H1 (cell line): ENCODE measurements at regions of chr6 and their contacts with region 1.

Region 1: DNA sequence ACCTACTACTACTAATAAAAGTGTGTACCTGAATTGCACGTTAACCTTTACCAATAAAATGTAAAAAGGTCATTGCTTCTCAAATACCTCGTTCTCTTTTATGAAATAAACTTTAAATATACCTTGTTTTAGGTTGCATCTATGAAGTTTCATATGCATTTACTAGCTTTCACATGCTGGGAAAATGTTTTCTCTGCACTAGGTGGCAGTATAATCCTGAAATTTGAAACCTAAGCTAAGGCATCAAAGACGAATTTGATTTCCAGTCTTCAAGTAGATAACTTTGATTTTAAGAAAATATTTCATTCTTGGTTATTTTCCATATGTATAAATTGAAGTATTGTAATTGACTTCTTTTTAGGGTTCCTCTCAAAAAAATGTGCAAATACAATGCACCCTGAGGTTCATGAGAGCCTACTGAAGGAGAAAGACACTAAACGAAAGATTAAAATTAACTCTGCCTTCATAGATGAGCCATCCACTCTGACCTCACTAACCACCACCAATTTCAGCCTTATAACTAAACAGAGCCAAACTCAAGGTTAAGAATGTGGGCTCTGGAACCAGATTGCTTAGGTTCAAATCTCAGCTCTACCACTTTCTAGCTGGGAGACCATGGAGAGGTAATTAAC is 7.3 kb upstream of the COL9A1 start:
- DNase-seq: no peak
- H3K4me3 ChIP-seq: no peak overlapping the region
- H3K27ac ChIP-seq: no peak overlapping the region
- H3K4me1 ChIP-seq: no peaks in the 10 kb centered on the region; a peak in 1 of 7 replicates
- H3K27me3 ChIP-seq: no peaks in the 10 kb centered on the region
- CTCF ChIP-seq: peak in 2 of 3 experiments; percentile 51 to 58; a peak in 2 of 4 replicates
- EP300 ChIP-seq: no peak
- POLR2A ChIP-seq: no peak
- RAD21 ChIP-seq: peak; percentile 66 to 72

Region 2: DNA sequence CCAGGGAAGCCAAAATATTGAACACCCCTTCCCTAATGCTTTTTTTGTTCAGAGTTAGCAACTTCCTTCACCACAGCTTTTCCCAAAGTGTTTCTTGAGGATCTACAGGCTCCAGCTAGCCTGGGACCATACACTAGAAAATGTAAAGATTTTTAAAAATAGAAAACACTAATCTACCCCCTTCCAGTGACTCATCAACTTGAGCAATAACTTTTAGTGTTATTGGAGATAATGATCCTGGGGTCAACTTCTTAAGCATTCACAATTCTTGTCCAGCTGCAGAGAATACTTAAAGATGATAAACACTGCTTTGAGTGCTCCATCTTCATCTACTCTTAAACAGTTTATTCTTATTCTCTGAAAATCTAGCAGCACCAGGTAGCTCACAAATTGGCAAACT is 138.9 kb before region 1 on chr6:
- CTCF ChIA-PET with region 1: no interaction called
- POLR2A ChIA-PET with region 1: no interaction called
- DNase-seq: no peak
- H3K4me3 ChIP-seq: no peak overlapping the region
- H3K27ac ChIP-seq: no peak overlapping the region
- H3K4me1 ChIP-seq: no peaks in the 10 kb centered on the region
- H3K27me3 ChIP-seq: no peaks in the 10 kb centered on the region
- CTCF ChIP-seq: no peak
- EP300 ChIP-seq: no peak
- POLR2A ChIP-seq: no peak
- RAD21 ChIP-seq: no peak

Region 3: DNA sequence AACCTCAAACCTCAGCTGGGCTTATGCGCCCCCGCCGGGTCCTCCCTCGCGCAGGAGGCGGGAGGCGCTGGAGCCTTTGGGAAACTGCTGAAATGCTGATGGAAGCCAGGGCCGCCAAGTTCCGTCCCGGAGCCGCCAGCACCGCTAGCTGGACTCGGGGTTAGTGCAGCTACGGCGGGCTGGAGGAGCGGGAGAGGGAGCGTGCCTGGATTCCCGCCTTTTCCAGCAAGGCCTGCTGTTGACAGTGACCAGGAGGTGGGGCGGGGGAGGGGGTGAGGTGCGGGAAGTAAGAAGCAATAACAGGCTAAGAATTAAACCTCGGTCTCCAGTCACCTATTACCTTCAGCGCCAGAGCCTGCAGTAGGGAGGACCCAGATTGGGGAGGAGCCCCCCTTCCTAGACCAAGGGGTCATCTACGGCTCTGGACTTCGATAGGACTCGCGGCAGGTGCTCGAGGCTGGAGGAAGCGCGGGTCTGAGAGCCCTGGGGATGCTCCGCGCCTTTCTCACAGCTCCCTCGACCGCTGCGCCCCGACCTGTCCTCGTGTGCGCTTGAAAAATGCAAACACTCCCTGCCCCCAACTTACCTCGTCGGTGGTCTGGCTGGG is 27.8 kb before region 1 on chr6:
- CTCF ChIA-PET with region 1: interaction called, 11 read pairs
- POLR2A ChIA-PET with region 1: no interaction called
- DNase-seq: peak; percentile 23 to 78
- H3K4me3 ChIP-seq: peak overlapping the region; percentile 28 to 68 (median 48)
- H3K27ac ChIP-seq: no peak overlapping the region
- H3K4me1 ChIP-seq: peaks cover 2 to 8% (median 5%) of the 10 kb centered on the region in 4 experiments; a peak in 5 of 7 replicates
- H3K27me3 ChIP-seq: peaks cover 13 to 38% (median 33%) of the 10 kb centered on the region in 4 experiments
- CTCF ChIP-seq: no peak
- EP300 ChIP-seq: no peak
- POLR2A ChIP-seq: peak in 1 of 2 experiments; percentile 31; a peak in 1 of 3 replicates
- RAD21 ChIP-seq: no peak

Region 4: DNA sequence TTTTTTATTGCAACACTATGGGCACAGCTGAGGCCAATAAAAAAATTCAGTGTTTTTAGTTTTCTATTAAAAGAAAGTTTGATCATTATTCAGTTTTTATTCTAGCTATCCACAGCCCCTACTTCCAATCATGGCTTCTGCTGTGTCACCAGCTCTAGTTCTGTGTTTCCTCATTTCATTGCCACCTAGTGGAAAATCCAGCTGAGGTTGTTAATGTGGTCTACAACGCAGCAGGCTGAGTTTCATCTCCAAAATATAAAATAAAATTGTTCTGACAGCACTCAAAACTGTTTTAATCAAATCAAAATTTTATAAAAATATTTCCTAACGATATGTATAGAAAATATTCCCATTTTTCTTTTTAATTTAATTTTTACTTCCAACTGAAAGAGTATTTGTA is 20.9 kb before region 1 on chr6:
- CTCF ChIA-PET with region 1: interaction called, 33 read pairs
- POLR2A ChIA-PET with region 1: no interaction called
- DNase-seq: no peak
- H3K4me3 ChIP-seq: no peak overlapping the region
- H3K27ac ChIP-seq: no peak overlapping the region
- H3K4me1 ChIP-seq: no peaks in the 10 kb centered on the region
- H3K27me3 ChIP-seq: no peaks in the 10 kb centered on the region; a peak in 1 of 7 replicates
- CTCF ChIP-seq: peak in 2 of 3 experiments; percentile 26 to 36; a peak in 2 of 4 replicates
- EP300 ChIP-seq: no peak
- POLR2A ChIP-seq: no peak
- RAD21 ChIP-seq: peak; percentile 27 to 38; a peak in 3 of 4 replicates

Region 5: GRCh38 chr6:70327036-70327435 is 16.9 kb after region 1 on chr6:
- CTCF ChIA-PET with region 1: interaction called, 20 read pairs
- POLR2A ChIA-PET with region 1: no interaction called
- DNase-seq: no peak
- H3K4me3 ChIP-seq: no peak overlapping the region
- H3K27ac ChIP-seq: no peak overlapping the region
- H3K4me1 ChIP-seq: no peaks in the 10 kb centered on the region
- H3K27me3 ChIP-seq: no peaks in the 10 kb centered on the region
- CTCF ChIP-seq: no peak
- EP300 ChIP-seq: no peak
- POLR2A ChIP-seq: no peak
- RAD21 ChIP-seq: no peak

Region 6: DNA sequence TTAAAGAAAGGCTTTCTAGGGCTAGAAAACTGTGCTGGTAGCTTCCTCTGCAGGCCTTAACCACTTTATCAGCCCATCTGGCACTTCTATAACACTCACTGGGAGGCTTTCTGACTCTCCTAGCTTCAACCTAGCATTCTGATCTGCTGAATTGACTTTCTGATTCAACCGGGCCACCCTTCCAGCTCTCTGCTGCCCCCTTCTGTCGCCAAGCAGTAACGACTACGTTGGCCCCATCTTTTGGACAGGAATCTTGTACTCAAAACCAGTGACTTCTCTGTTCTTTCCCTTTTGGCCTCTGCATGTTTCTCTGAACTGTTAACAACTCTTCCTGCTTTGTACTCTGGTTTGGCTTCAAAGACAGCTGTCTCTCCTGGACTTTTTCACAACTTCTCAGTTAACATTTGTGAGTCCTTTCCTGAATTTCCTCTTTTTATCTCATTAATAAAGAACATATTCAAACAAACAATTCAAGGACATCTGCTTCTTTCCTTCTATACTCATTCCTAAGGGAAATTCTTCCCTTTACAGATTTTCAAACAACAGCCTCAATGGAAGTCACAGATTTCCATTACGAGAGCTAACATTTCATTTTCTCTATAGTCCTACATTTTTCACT is 59.3 kb after region 1 on chr6:
- CTCF ChIA-PET with region 1: interaction called, 228 read pairs
- POLR2A ChIA-PET with region 1: no interaction called
- DNase-seq: peak; percentile 47 to 84
- H3K4me3 ChIP-seq: no peak overlapping the region
- H3K27ac ChIP-seq: no peak overlapping the region
- H3K4me1 ChIP-seq: no peaks in the 10 kb centered on the region
- H3K27me3 ChIP-seq: no peaks in the 10 kb centered on the region
- CTCF ChIP-seq: peak; percentile 77 to 96 (median 91)
- EP300 ChIP-seq: no peak
- POLR2A ChIP-seq: no peak
- RAD21 ChIP-seq: peak; percentile 88 to 89

Region 7: DNA sequence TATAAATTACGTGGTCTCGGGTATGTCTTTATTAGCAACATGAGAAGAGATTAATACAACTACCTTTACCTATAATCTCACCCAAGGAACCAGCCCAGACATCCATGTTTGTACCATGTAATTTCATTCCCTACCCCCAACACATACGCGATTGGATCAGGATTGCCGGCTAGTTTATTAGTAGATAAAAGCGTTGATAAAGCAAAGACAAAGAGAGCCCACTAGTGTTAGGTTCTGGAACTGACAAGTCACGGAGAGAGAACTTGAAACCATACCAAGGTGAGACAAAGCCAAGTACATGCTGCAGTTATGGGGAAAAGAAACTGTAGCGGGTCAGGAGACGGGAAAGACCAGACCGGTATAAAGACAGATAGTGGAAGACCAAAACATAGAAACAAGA is 65.7 kb after region 1 on chr6:
- CTCF ChIA-PET with region 1: interaction called, 228 read pairs
- POLR2A ChIA-PET with region 1: no interaction called
- DNase-seq: peak in 1 of 2 experiments; percentile 47
- H3K4me3 ChIP-seq: no peak overlapping the region
- H3K27ac ChIP-seq: no peak overlapping the region
- H3K4me1 ChIP-seq: no peaks in the 10 kb centered on the region; a peak in 1 of 7 replicates
- H3K27me3 ChIP-seq: no peaks in the 10 kb centered on the region
- CTCF ChIP-seq: peak in 2 of 3 experiments; percentile 40 to 67; a peak in 3 of 4 replicates
- EP300 ChIP-seq: no peak
- POLR2A ChIP-seq: no peak
- RAD21 ChIP-seq: peak; percentile 56 to 62

Region 8: GRCh38 chr6:70489393-70489792 is 179.2 kb after region 1 on chr6:
- CTCF ChIA-PET with region 1: no interaction called
- POLR2A ChIA-PET with region 1: no interaction called
- DNase-seq: no peak
- H3K4me3 ChIP-seq: no peak overlapping the region
- H3K27ac ChIP-seq: no peak overlapping the region
- H3K4me1 ChIP-seq: no peaks in the 10 kb centered on the region
- H3K27me3 ChIP-seq: no peaks in the 10 kb centered on the region
- CTCF ChIP-seq: no peak
- EP300 ChIP-seq: no peak
- POLR2A ChIP-seq: no peak
- RAD21 ChIP-seq: no peak

Region 9: GRCh38 chr6:71012866-71013469 is 702.8 kb after region 1 on chr6:
- CTCF ChIA-PET with region 1: interaction called, 27 read pairs
- POLR2A ChIA-PET with region 1: no interaction called
- DNase-seq: no peak
- H3K4me3 ChIP-seq: no peak overlapping the region
- H3K27ac ChIP-seq: no peak overlapping the region
- H3K4me1 ChIP-seq: no peaks in the 10 kb centered on the region; a peak in 2 of 7 replicates
- H3K27me3 ChIP-seq: no peaks in the 10 kb centered on the region
- CTCF ChIP-seq: peak in 2 of 3 experiments; percentile 79 to 81; a peak in 3 of 4 replicates
- EP300 ChIP-seq: no peak
- POLR2A ChIP-seq: no peak
- RAD21 ChIP-seq: peak; percentile 92 to 95